Activated CD4-positive, alpha-beta memory T cell treated with anti-CD3 and anti-CD28 coated beads, Interleukin-2, amount 10 ng/mL, durations not matched to agents 7 days and 5 days (primary cell): ENCODE measurements at regions of chr1 and their contacts with region 1.

Region 1: DNA sequence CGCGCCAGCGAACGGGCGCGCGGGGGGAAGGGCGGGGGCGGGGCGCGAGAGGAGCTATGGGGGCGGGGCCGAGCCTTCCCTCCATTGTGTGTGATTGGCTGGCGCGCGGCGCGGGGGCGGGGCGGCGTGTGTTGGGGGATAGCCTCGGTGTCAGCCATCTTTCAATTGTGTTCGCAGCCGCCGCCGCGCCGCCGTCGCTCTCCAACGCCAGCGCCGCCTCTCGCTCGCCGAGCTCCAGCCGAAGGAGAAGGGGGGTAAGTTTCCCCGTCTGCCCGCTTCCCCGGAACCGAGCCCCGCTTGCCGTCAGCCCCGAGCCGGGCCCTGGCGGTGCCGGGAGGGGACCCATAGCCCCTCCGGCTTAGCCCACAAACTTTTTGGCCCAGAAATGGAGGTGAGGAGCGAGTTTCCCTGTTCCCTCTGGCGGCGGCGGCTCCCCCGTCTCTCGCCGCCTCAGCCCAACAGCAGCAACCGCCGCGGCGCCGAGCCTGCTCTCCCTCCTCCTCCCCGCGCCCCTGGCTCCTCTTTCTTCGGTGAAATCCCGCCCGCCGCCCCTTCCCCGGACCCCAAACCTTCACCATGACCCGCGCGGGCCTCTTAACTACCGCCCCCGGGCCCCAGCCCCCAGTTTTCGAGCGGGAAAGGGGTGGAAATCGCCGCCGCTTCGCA is at the start of gene H3-3A:
- DNase-seq: peak; percentile 98
- H3K4me3 Mint-ChIP-seq: peak within 1 kb of the TSS; percentile 99
- H3K27ac Mint-ChIP-seq: peak within 1 kb of the TSS; percentile 100
- H3K4me1 Mint-ChIP-seq: peaks cover 41% of the 10 kb centered on the region
- H3K27me3 Mint-ChIP-seq: no peaks in the 10 kb centered on the region
- total RNA-seq, gene H3-3A: 480 to 486 TPM

Region 2: DNA sequence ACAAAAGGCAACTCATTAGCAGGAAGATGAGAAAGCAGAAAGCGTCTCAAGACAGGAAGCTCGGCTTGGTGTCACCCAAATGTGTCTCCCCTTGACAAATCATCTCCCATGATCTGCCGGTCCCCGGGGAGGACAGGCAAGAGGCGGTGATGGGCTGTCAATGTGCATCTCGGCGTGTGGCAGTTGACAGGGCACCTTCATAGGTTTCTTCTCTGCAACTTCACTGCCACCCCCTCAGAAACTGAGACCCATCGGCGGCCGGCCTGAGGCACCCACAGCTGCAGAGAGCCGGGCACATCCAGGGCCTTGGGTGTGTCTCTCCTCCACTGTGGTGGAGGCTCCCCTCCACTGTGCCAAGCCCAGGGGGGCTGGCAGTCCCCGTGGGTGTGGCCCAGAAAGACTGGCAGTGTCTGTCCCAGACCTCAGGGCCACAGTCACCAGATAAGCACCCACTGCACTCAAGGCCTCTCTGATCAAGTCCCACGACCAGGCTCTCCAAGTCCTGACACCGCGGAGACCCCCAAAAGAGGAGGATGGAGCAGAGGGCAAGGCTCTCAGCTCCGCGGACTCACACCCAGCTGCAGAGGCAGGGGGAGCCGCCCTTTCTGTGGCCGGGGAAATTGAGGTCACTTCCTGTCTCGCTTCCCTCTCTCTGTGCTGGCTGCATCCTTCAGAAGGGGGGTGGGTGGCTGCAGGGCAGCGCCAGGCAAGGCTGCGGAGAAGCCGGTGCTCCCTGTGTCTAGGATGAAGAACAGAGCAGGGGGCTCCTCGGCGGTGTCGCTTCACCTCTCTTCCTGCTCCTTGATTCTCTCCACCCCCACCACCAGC is 595.3 kb before region 1 on chr1:
- CTCF ChIA-PET with region 1: interaction called, 6 read pairs
- POLR2A ChIA-PET with region 1: interaction called, 36 read pairs
- DNase-seq: peak; percentile 91
- H3K4me3 Mint-ChIP-seq: peak overlapping the region; percentile 91
- H3K27ac Mint-ChIP-seq: peak overlapping the region; percentile 99
- H3K4me1 Mint-ChIP-seq: peaks cover 64% of the 10 kb centered on the region
- H3K27me3 Mint-ChIP-seq: no peaks in the 10 kb centered on the region

Region 3: GRCh38 chr1:225923692-225924555 is 138.8 kb before region 1 on chr1 and contains the start of gene PYCR2:
- CTCF ChIA-PET with region 1: interaction called, 3 read pairs
- POLR2A ChIA-PET with region 1: interaction called, 14 read pairs
- DNase-seq: peak; percentile 97
- H3K4me3 Mint-ChIP-seq: peak within 1 kb of the TSS; percentile 96
- H3K27ac Mint-ChIP-seq: peak within 1 kb of the TSS; percentile 89
- H3K4me1 Mint-ChIP-seq: peaks cover 54% of the 10 kb centered on the region
- H3K27me3 Mint-ChIP-seq: no peaks in the 10 kb centered on the region
- total RNA-seq, gene PYCR2: 101 to 105 TPM

Region 4: GRCh38 chr1:225942574-225942973 is 120.1 kb before region 1 on chr1:
- CTCF ChIA-PET with region 1: no interaction called
- POLR2A ChIA-PET with region 1: no interaction called
- DNase-seq: no peak
- H3K4me3 Mint-ChIP-seq: no peak overlapping the region
- H3K27ac Mint-ChIP-seq: no peak overlapping the region
- H3K4me1 Mint-ChIP-seq: peaks cover 11% of the 10 kb centered on the region
- H3K27me3 Mint-ChIP-seq: peaks cover 11% of the 10 kb centered on the region

Region 5: DNA sequence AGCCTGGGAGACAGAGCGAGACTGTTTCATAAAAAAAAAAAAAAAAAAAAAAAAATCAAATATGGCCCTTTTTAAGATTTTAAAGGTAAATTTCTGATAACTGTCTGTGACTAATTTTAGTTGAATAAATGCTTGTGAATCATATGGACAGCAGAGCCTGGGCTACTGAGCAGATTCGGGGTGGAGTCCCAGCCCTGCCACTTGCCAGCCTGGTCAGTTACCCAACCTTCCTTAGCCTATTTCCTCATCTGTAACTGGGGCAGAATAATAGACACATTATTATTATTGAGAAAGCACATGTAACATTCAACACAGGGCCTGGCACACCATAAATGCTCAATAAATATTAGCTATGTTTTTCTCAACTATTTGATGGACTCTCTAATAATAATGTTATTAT is 11.3 kb before region 1 on chr1:
- CTCF ChIA-PET with region 1: interaction called, 21 read pairs
- POLR2A ChIA-PET with region 1: interaction called, 19 read pairs
- DNase-seq: no peak
- H3K4me3 Mint-ChIP-seq: no peak overlapping the region
- H3K27ac Mint-ChIP-seq: no peak overlapping the region
- H3K4me1 Mint-ChIP-seq: peaks cover 2% of the 10 kb centered on the region
- H3K27me3 Mint-ChIP-seq: no peaks in the 10 kb centered on the region

Region 6: GRCh38 chr1:226109829-226110248 is 47.1 kb after region 1 on chr1:
- CTCF ChIA-PET with region 1: interaction called, 10 read pairs
- POLR2A ChIA-PET with region 1: interaction called, 45 read pairs
- DNase-seq: peak; percentile 84
- H3K4me3 Mint-ChIP-seq: peak overlapping the region; percentile 87
- H3K27ac Mint-ChIP-seq: peak overlapping the region; percentile 78
- H3K4me1 Mint-ChIP-seq: peaks cover 19% of the 10 kb centered on the region
- H3K27me3 Mint-ChIP-seq: no peaks in the 10 kb centered on the region

Region 7: DNA sequence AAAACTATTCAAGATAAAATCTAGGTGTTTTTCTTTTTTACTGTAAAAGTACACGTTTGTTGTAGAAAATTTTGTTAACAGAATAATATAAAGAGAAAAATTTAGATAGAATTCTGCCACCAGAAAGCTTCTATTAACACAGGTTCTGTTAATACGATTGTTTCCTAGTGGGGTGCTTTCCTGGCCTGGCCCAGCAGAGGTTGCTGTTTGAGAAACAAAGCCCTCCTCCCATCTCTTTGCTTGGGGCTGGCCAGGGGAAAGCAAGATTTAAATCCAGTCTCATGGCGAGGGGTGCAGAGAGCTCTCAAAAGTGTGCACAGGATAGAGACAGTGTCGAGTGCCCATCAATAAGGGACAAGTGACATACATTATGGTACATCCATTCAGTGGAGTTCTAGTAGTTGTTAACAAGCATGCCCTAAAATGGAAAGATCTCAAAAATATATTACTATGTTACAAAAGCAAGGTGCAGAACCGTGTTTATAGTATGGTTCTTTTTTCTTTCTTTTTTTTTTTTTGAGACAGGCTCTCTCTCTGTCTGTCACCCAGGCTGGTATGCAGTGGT is 138.4 kb after region 1 on chr1:
- CTCF ChIA-PET with region 1: interaction called, 13 read pairs
- POLR2A ChIA-PET with region 1: no interaction called
- DNase-seq: no peak
- H3K4me3 Mint-ChIP-seq: no peak overlapping the region
- H3K27ac Mint-ChIP-seq: no peak overlapping the region
- H3K4me1 Mint-ChIP-seq: peaks cover 3% of the 10 kb centered on the region
- H3K27me3 Mint-ChIP-seq: peaks cover 12% of the 10 kb centered on the region